ENCODE measurements at regions of chr16 and their contacts with region 1.

Region 1: GRCh38 chr16:30571695-30572600 is at the start of gene ZNF688:
- DNase-seq: peak; percentile 93
- H3K4me3 ChIP-seq: peak within 1 kb of the TSS; percentile 64 to 68
- H3K27ac ChIP-seq: peak within 1 kb of the TSS; percentile 83 to 96
- H3K4me1 ChIP-seq: peaks cover 5 to 12% of the 10 kb centered on the region in 2 experiments; a peak in 1 of 4 replicates
- H3K27me3 ChIP-seq: no peaks in the 10 kb centered on the region
- CTCF ChIP-seq: no peak
- EP300 ChIP-seq: peak in 1 of 2 experiments; percentile 18; a peak in 1 of 4 replicates
- RAD21 ChIP-seq: no peak
- polyA plus RNA-seq, gene ZNF688: 9.1 and 13.4 TPM in 2 replicates

Region 2: DNA sequence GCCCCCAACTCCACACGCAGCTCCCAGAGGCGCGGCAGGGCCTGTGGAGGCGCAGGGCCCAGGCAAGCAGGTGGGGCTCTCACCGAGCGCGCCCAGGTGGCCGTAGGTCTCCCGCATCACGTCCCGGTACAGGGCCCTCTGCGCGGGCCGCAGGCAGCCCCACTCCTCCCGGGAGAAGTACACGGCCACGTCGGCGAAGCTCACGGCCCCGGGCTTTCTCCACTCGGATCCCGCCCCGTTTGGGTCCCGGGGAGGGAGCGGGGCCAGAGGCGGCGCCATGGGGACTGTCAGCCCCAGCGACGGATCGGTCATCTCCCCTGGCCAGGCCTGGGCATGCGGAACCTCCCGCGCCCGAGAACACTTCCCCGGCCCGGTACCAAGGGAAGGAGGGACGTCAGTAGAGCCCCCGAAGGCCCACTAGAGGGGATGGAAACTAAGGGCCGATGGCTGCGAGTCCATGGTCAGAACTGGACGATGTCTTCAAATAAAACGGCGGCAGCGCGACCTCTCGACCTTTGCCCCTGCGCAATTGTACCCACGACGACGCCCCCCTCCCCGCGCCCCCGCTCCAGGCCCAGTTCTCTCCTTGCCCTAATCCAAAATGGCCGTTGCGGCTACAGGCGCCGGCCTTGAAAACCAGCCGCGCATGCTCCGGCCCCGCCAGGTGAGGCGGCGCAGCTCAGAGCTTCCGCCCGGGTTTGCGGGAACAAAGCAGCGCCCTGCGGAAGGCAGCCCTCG is 37.4 kb before region 1 on chr16 and contains the start of gene ZNF747:
- CTCF ChIA-PET with region 1: interaction called, 3 read pairs
- POLR2A ChIA-PET with region 1: interaction called, 15 read pairs
- DNase-seq: peak; percentile 95
- H3K4me3 ChIP-seq: peak within 1 kb of the TSS; percentile 65 to 68
- H3K27ac ChIP-seq: peak within 1 kb of the TSS; percentile 81 to 91
- H3K4me1 ChIP-seq: peaks cover 8 to 17% of the 10 kb centered on the region in 2 experiments; a peak in 3 of 4 replicates
- H3K27me3 ChIP-seq: no peaks in the 10 kb centered on the region
- CTCF ChIP-seq: 0 out of 2 replicates have a peak, but pooled peaks have one; percentile 7
- EP300 ChIP-seq: peak in 1 of 2 experiments; percentile 26; a peak in 1 of 4 replicates
- RAD21 ChIP-seq: no peak
- polyA plus RNA-seq, gene ZNF747: 5.6 and 5.8 TPM in 2 replicates

Region 3: GRCh38 chr16:30557957-30558788 is 13.8 kb before region 1 on chr16 and contains the start of gene ZNF764:
- CTCF ChIA-PET with region 1: interaction called, 3 read pairs
- POLR2A ChIA-PET with region 1: interaction called, 44 read pairs
- DNase-seq: peak; percentile 96
- H3K4me3 ChIP-seq: peak within 1 kb of the TSS; percentile 75 to 91
- H3K27ac ChIP-seq: peak within 1 kb of the TSS; percentile 88 to 92
- H3K4me1 ChIP-seq: peaks cover 0 to 6% of the 10 kb centered on the region in 2 experiments; a peak in 1 of 4 replicates
- H3K27me3 ChIP-seq: no peaks in the 10 kb centered on the region
- CTCF ChIP-seq: no peak
- EP300 ChIP-seq: no peak
- RAD21 ChIP-seq: peak; percentile 1; the same call in 1 of the 2 replicates
- polyA plus RNA-seq, gene ZNF764: 2.8 and 3.4 TPM in 2 replicates

Region 4: DNA sequence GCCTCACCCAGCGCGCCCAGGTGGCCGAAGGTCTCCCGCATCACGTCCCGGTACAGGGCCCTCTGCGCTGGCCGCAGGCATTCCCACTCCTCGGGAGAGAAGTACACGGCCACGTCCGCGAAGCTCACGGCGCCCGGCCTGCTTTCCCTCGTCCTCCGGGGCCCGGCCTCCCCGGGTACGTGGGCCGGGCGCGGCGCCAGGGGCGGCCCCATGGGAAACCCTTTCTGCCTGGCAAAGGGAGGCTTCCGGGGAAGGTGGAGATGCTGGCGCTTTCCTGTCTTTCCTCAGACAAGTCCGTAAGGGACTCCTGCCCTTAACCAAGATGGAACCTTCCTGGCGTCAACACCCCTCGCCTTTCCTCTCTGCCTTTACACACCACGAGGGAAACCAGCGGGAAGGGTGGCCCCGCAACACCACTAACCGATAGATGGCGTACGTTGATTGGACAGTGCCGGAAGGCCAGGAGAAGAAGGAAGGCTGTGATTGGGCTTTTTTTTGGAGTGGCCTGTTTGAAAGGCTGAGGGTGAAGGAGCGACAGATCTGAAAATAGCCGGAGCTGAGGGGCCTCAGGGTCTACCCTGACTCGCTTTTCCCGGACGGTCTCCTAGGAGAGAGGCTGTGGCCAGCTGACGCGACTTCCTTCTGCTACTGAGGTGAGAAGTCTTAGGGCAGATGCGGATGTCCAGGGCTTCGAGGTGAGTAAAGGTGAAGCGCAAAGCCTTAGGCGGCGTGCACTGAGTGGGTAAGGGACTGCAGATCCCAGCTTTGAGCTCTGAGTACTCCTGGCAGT is 13.6 kb after region 1 on chr16 and contains the start of gene ZNF785:
- CTCF ChIA-PET with region 1: interaction called, 5 read pairs
- POLR2A ChIA-PET with region 1: interaction called, 23 read pairs
- DNase-seq: peak; percentile 97
- H3K4me3 ChIP-seq: peak within 1 kb of the TSS; percentile 67 to 86
- H3K27ac ChIP-seq: peak within 1 kb of the TSS; percentile 87
- H3K4me1 ChIP-seq: peaks cover 0 to 4% of the 10 kb centered on the region in 2 experiments; a peak in 1 of 4 replicates
- H3K27me3 ChIP-seq: no peaks in the 10 kb centered on the region
- CTCF ChIP-seq: no peak; the same call in 1 of the 2 replicates
- EP300 ChIP-seq: peak in 1 of 2 experiments; percentile 16; a peak in 1 of 4 replicates
- RAD21 ChIP-seq: peak; percentile 36
- polyA plus RNA-seq, gene ZNF785: 8.8 and 10.6 TPM in 2 replicates

Region 5: GRCh38 chr16:30628627-30629540 is 56.9 kb after region 1 on chr16:
- CTCF ChIA-PET with region 1: interaction called, 10 read pairs
- POLR2A ChIA-PET with region 1: interaction called, 4 read pairs
- DNase-seq: peak; percentile 74
- H3K4me3 ChIP-seq: peak overlapping the region in 1 of 2 experiments; percentile 4; a peak in 1 of 4 replicates
- H3K27ac ChIP-seq: no peak overlapping the region
- H3K4me1 ChIP-seq: no peaks in the 10 kb centered on the region
- H3K27me3 ChIP-seq: no peaks in the 10 kb centered on the region
- CTCF ChIP-seq: peak; percentile 91
- EP300 ChIP-seq: no peak
- RAD21 ChIP-seq: peak; percentile 87

Region 6: GRCh38 chr16:30657866-30658730 is 86.2 kb after region 1 on chr16 and contains the start of gene FBRS:
- CTCF ChIA-PET with region 1: interaction called, 10 read pairs
- POLR2A ChIA-PET with region 1: no interaction called
- DNase-seq: peak; percentile 96
- H3K4me3 ChIP-seq: peak within 1 kb of the TSS; percentile 87 to 91
- H3K27ac ChIP-seq: peak within 1 kb of the TSS; percentile 99
- H3K4me1 ChIP-seq: peaks cover 9 to 27% of the 10 kb centered on the region in 2 experiments; a peak in 2 of 4 replicates
- H3K27me3 ChIP-seq: no peaks in the 10 kb centered on the region
- CTCF ChIP-seq: peak; percentile 81
- EP300 ChIP-seq: no peak
- RAD21 ChIP-seq: peak; percentile 68
- polyA plus RNA-seq, gene FBRS: 9.6 and 11.5 TPM in 2 replicates

Region 7: DNA sequence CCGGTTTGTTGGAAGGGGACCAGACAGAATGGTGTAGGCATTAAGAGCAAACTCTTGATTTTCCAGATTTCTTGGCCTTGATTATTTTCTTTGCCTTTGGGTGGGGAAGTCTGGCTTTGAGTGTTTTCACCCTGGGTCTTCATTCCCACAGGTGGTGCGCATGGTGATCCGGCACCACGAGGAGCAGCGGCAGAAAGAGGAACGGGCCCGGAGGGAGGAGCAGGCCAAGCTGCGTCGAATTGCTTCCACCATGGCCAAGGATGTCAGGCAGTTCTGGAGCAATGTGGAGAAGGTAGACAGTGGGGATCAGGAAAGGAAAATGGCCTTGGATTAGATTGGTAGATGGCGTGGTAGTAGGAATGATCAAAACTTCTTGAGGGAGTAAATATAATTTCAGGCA is 135.5 kb after region 1 on chr16:
- CTCF ChIA-PET with region 1: no interaction called
- POLR2A ChIA-PET with region 1: no interaction called
- DNase-seq: no peak
- H3K4me3 ChIP-seq: no peak overlapping the region
- H3K27ac ChIP-seq: no peak overlapping the region
- H3K4me1 ChIP-seq: no peaks in the 10 kb centered on the region
- H3K27me3 ChIP-seq: no peaks in the 10 kb centered on the region
- CTCF ChIP-seq: no peak
- EP300 ChIP-seq: no peak
- RAD21 ChIP-seq: no peak

Measured in SK-N-SH (cell line).